CD4-positive, alpha-beta T cell (primary cell): ENCODE measurements at regions of chr9 and their contacts with region 1.

Region 1: GRCh38 chr9:33290247-33291030 is at the start of gene NFX1:
- DNase-seq: peak; percentile 95 to 100 (median 98)
- ATAC-seq: peak; percentile 79
- H3K4me3 ChIP-seq: peak within 1 kb of the TSS; percentile 92
- H3K4me3 Mint-ChIP-seq: peak within 1 kb of the TSS; percentile 88
- H3K27ac ChIP-seq: peak within 1 kb of the TSS; percentile 99 to 100
- H3K27ac Mint-ChIP-seq: peak within 1 kb of the TSS; percentile 99
- H3K4me1 ChIP-seq: peaks cover 55% of the 10 kb centered on the region
- H3K4me1 Mint-ChIP-seq: peaks cover 62% of the 10 kb centered on the region
- H3K27me3 ChIP-seq: no peaks in the 10 kb centered on the region
- H3K27me3 Mint-ChIP-seq: no peaks in the 10 kb centered on the region
- CTCF ChIP-seq: no peak
- total RNA-seq, gene NFX1: 33.1 to 34.1 TPM

Region 2: DNA sequence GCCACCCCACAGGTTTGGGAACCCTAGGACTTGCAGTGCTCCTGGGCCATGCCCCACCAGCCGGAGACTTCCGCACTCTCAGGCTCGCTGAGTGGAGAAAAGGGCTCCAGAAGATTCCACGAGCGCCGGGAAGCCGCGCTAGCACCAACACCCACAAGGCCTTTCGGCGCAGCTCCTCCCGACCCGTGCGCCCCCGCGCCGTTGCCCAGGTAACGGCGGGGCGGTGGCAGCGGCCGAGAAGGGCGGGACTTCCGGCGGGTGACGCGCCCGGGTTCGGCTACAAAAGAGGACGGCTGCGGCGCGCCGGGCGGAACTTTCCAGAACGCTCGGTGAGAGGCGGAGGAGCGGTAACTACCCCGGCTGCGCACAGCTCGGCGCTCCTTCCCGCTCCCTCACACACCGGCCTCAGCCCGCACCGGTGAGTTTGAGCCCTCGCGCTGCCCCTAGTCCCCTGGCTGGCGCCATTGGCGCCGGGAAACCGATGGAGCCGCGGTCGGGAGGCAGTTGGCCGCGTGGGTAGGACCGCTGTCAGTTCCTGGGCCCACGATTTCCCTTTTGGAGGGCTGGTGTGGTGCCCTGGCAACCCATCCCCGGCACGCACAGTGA is 265.4 kb before region 1 on chr9 and contains the start of gene DNAJA1:
- CTCF ChIA-PET with region 1: interaction called, 4 read pairs
- POLR2A ChIA-PET with region 1: interaction called, 36 read pairs
- intact Hi-C with region 1: no loop called
- DNase-seq: peak; percentile 90 to 98 (median 96)
- ATAC-seq: peak; percentile 83
- H3K4me3 ChIP-seq: peak within 1 kb of the TSS; percentile 90
- H3K4me3 Mint-ChIP-seq: peak within 1 kb of the TSS; percentile 96
- H3K27ac ChIP-seq: peak within 1 kb of the TSS; percentile 99 to 100
- H3K27ac Mint-ChIP-seq: peak within 1 kb of the TSS; percentile 93
- H3K4me1 ChIP-seq: peaks cover 43% of the 10 kb centered on the region
- H3K4me1 Mint-ChIP-seq: peaks cover 73% of the 10 kb centered on the region
- H3K27me3 ChIP-seq: no peaks in the 10 kb centered on the region
- H3K27me3 Mint-ChIP-seq: no peaks in the 10 kb centered on the region
- CTCF ChIP-seq: no peak
- total RNA-seq, gene DNAJA1: 150 to 156 TPM

Region 3: DNA sequence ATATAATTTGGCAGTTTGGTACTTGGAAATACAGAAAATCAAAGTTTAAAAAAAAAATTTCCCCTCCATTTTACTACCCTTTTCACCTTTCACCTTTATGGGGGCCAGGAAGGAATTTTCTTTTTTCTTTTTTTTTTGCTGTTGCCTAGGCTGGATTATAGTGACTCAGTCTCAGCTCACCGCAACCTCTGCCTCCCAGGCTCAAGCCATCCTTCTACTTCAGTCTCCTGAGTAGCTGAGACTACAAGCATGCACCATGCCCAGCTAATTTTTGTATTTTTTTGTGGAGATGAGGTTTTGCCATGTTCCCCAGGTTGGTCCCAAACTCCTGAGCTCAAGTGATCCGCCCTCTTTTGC is 16.5 kb before region 1 on chr9:
- CTCF ChIA-PET with region 1: interaction called, 8 read pairs
- POLR2A ChIA-PET with region 1: interaction called, 11 read pairs
- intact Hi-C with region 1: no loop called
- DNase-seq: no peak
- ATAC-seq: no peak
- H3K4me3 ChIP-seq: no peak overlapping the region
- H3K4me3 Mint-ChIP-seq: no peak overlapping the region
- H3K27ac ChIP-seq: no peak overlapping the region
- H3K27ac Mint-ChIP-seq: no peak overlapping the region
- H3K4me1 ChIP-seq: no peaks in the 10 kb centered on the region
- H3K4me1 Mint-ChIP-seq: peaks cover 17% of the 10 kb centered on the region
- H3K27me3 ChIP-seq: no peaks in the 10 kb centered on the region
- H3K27me3 Mint-ChIP-seq: no peaks in the 10 kb centered on the region
- CTCF ChIP-seq: no peak

Region 4: DNA sequence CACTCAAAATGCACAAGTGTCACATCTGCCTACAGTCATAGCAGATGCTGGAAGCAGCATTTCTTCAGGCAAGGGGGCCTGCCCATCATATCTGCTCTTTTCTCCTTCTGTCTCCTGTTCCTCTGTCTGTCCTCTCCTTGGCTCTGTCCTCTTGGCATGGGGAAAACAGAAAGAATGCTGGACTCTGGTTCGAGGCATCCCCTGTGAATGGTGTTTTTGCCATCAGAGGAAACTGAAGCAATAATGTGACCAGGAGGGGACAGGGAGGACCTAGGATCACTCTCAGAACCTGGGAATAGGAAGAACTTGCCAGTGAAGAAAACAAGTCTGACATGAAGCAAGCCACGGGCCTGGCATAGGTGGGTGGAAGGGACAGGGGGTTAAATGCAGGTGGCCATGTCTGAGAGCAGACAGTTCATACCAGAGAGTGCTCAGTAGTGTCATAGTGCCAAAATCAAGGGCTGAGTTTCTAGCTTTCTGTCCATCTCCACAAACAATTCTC is 76.6 kb after region 1 on chr9:
- CTCF ChIA-PET with region 1: no interaction called
- POLR2A ChIA-PET with region 1: no interaction called
- intact Hi-C with region 1: no loop called
- DNase-seq: no peak
- ATAC-seq: no peak
- H3K4me3 ChIP-seq: no peak overlapping the region
- H3K4me3 Mint-ChIP-seq: no peak overlapping the region
- H3K27ac ChIP-seq: no peak overlapping the region
- H3K27ac Mint-ChIP-seq: no peak overlapping the region
- H3K4me1 ChIP-seq: no peaks in the 10 kb centered on the region
- H3K4me1 Mint-ChIP-seq: no peaks in the 10 kb centered on the region
- H3K27me3 ChIP-seq: no peaks in the 10 kb centered on the region
- H3K27me3 Mint-ChIP-seq: no peaks in the 10 kb centered on the region
- CTCF ChIP-seq: no peak

Region 5: DNA sequence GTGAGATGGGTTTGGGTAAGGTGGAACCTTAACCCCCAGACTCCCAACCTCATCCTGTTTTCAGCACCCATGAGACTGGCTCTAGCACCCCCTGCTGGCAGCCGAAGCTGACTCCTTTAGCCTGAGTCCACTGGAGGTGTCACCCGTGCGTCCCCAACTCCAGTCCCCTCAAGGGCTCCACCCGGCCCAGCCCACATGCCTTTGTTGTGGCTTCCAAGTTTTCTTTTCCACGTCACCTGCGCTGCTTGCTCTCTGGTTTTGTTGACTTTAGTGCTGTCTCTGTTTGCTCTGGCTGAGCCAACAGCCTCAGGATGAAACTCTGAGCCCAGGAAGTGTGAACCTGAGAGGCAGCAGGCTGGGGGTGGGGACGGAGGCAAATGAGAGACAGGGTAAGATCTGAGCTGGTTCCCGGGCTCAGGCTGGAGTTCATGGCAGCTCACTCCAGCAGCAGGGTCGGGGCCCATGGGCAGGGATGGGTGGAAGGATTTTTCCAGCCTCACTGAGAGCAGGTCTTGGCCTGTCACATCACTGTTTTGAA is 125.1 kb after region 1 on chr9:
- CTCF ChIA-PET with region 1: interaction called, 4 read pairs
- POLR2A ChIA-PET with region 1: interaction called, 28 read pairs
- intact Hi-C with region 1: loop called in 1 of 2 experiments (anchors 1 kb)
- DNase-seq: peak; percentile 91 to 99 (median 95)
- ATAC-seq: peak; percentile 88
- H3K4me3 ChIP-seq: peak overlapping the region; percentile 25
- H3K4me3 Mint-ChIP-seq: peak overlapping the region; percentile 79
- H3K27ac ChIP-seq: peak overlapping the region; percentile 54 to 58
- H3K27ac Mint-ChIP-seq: peak overlapping the region; percentile 93
- H3K4me1 ChIP-seq: peaks cover 64% of the 10 kb centered on the region
- H3K4me1 Mint-ChIP-seq: peaks cover 45% of the 10 kb centered on the region
- H3K27me3 ChIP-seq: no peaks in the 10 kb centered on the region
- H3K27me3 Mint-ChIP-seq: no peaks in the 10 kb centered on the region
- CTCF ChIP-seq: peak; percentile 83

Region 6: GRCh38 chr9:33466565-33467495 is 176.4 kb after region 1 on chr9:
- CTCF ChIA-PET with region 1: interaction called, 3 read pairs
- POLR2A ChIA-PET with region 1: interaction called, 5 read pairs
- intact Hi-C with region 1: loop called in 1 of 2 experiments (anchors 5 kb)
- DNase-seq: peak; percentile 62 to 86 (median 77)
- ATAC-seq: peak; percentile 86
- H3K4me3 ChIP-seq: no peak overlapping the region
- H3K4me3 Mint-ChIP-seq: no peak overlapping the region
- H3K27ac ChIP-seq: peak overlapping the region in 1 of 2 donors; percentile 21
- H3K27ac Mint-ChIP-seq: peak overlapping the region; percentile 47
- H3K4me1 ChIP-seq: peaks cover 15% of the 10 kb centered on the region
- H3K4me1 Mint-ChIP-seq: peaks cover 8% of the 10 kb centered on the region
- H3K27me3 ChIP-seq: no peaks in the 10 kb centered on the region
- H3K27me3 Mint-ChIP-seq: no peaks in the 10 kb centered on the region
- CTCF ChIP-seq: peak; percentile 96

Region 7: GRCh38 chr9:33721674-33722358 is 431.4 kb after region 1 on chr9:
- CTCF ChIA-PET with region 1: no interaction called
- POLR2A ChIA-PET with region 1: no interaction called
- intact Hi-C with region 1: loop called (anchors 2 to 5 kb)
- DNase-seq: peak; percentile 77 to 94 (median 86)
- ATAC-seq: peak; percentile 69
- H3K4me3 ChIP-seq: no peak overlapping the region
- H3K4me3 Mint-ChIP-seq: no peak overlapping the region
- H3K27ac ChIP-seq: no peak overlapping the region
- H3K27ac Mint-ChIP-seq: no peak overlapping the region
- H3K4me1 ChIP-seq: peaks cover 6% of the 10 kb centered on the region
- H3K4me1 Mint-ChIP-seq: no peaks in the 10 kb centered on the region
- H3K27me3 ChIP-seq: no peaks in the 10 kb centered on the region
- H3K27me3 Mint-ChIP-seq: peaks cover 15% of the 10 kb centered on the region
- CTCF ChIP-seq: peak; percentile 100